Activated B cell treated with CpG ODN at 0.5 μM for 24 hours (primary cell): ENCODE measurements at regions of chr9 and their contacts with region 1.

Region 1: DNA sequence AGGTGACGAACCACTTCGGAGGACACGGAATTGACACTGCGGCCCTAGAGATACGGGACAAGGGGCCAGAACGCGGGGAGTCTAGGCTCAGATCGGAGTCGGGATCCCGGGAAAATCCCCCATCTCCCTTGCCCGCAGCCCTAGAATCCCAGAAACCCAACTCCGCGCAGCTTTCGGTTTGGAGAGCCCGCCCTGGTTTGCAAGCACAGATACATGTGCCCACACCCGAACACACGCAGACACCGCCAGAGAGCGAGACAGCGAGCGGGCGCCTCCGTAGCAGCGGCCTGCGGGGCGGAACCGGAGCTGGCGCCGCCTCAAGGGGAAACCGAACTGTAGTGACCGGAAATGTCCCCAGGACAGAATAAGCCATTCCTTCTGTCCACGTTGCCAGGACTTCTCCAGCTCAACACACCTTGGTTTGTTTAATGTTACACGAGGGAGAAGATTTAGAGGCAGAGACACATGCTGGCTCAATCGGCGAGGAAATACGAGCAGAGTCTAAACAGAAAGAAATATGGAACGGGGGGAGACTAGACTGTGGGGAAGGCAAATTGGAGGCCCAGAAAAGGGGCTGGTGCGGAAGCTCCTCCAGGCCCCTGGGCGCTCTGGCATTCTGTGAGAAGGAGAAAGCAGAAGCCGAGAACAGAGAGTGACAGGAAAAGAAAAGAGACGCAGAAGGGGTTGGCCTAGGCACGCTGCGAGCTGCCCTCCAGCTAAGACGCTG is 2.9 kb upstream of the PAX5 start:
- DNase-seq: peak; percentile 65
- ATAC-seq: peak; percentile 31
- H3K4me3 Mint-ChIP-seq: peak overlapping the region; percentile 90
- H3K27ac Mint-ChIP-seq: peak overlapping the region; percentile 96
- H3K4me1 Mint-ChIP-seq: peaks cover 65% of the 10 kb centered on the region
- H3K27me3 Mint-ChIP-seq: no peaks in the 10 kb centered on the region
- CTCF ChIP-seq: no peak

Region 2: DNA sequence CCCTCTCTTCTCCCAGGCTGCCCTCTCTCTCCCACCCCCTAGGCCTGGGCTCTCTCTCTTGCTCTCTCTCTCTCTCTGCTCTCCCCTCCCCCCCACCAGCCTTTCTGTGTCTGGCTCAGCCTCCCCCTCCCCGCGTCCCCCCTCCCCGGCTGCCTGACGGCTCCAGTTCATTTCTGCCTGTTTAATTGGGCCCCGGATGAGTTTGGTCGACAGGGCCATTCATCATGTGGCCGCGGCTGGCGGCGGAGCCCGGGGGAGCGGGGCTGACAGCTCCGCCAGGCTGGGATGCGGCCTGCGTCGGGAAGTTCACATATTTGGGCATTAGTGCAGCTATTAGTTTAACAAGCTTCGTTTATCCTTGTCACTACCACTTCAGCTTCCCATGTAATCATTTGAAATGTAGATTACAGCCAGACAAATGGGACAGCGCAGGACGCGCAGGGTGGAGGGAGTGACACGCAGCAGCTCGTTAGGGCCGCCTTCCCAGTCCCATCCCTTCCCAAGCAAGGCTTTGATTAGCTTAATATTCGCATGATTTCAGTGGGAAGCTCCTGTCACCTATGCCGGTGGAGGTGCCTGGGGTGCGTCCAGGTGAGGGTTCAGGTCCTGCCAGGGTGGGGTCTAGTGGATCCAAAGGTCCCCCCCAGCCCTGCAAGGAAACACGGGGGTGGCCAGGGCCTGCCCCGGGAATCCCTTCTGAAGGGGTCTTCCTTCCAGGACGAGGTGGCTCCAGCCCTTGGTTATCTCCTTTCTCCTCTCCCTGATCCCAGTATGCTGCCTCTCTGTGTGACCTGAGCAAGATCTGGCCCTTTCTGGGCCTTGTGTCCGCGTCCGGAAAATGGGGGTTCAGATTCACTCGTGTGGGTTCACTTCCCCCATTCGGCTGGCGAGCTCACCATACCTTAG is 217.7 kb before region 1 on chr9:
- CTCF ChIA-PET with region 1: no interaction called
- POLR2A ChIA-PET with region 1: no interaction called
- intact Hi-C with region 1: no loop called
- DNase-seq: no peak
- ATAC-seq: no peak
- H3K4me3 Mint-ChIP-seq: no peak overlapping the region
- H3K27ac Mint-ChIP-seq: no peak overlapping the region
- H3K4me1 Mint-ChIP-seq: peaks cover 6% of the 10 kb centered on the region
- H3K27me3 Mint-ChIP-seq: peaks cover 37% of the 10 kb centered on the region
- CTCF ChIP-seq: no peak

Region 3: DNA sequence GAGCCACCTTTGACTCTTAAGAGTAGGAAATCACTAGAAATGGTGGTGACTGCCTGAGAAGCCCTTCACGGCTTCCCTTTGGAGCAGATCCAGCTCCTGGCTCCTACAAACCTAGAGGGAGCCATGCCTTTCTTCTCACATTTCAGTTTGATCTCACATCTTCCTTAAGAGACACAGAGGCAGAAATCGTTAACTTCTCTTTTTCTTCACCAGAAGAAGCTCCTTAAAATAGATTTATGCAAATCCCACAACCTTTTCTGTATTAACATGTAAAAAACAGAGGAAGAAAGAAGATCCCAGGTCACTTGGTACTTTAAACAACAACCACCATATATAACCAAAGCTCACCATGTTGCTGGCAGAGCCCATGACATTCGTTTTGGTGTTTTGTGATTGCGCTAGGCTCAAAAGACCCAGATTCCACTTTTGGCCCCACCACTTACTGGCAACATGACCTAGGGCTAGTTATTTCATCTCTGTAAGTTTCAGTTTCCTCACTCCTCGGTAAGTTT is 32.5 kb before region 1 on chr9:
- CTCF ChIA-PET with region 1: interaction called, 3 read pairs
- POLR2A ChIA-PET with region 1: interaction called, 291 read pairs
- intact Hi-C with region 1: no loop called
- DNase-seq: no peak
- ATAC-seq: peak; percentile 37
- H3K4me3 Mint-ChIP-seq: peak overlapping the region; percentile 86
- H3K27ac Mint-ChIP-seq: peak overlapping the region; percentile 84
- H3K4me1 Mint-ChIP-seq: peaks cover 94% of the 10 kb centered on the region
- H3K27me3 Mint-ChIP-seq: no peaks in the 10 kb centered on the region
- CTCF ChIP-seq: no peak

Region 4: DNA sequence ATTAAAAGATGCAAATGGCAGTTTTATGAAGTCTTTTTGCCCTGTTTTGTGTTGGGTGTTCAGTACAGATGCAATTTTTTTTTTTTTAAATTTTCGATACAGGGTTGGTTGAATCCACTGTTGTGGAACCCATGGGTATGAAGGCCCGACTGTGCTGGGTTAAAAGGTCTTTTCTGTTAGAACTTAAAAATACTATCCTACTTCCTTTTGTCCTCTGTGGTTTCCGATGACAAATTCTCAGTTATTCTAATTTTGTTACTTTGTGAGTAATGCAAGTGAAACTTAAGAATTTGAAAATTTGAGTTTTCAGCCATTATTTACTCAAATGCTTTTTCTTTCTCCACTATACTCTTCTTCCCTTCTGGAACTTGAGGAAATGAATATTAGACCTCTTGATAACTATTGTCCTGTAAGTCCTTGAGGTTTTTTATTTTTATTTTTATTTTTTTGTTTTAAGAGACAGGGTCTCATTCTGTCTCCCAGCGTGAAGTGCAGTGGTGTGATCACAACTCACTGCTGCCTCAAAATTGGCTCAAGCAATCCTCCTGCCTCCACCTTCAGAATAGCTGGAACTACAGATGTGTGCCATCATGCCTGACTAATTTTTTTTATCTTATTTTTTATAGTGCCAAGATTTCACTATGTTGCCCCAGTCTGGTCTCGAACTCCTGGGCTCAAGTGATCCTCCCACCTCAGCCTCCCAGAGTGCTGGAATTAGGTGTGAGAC is 150.9 kb after region 1 on chr9:
- CTCF ChIA-PET with region 1: no interaction called
- POLR2A ChIA-PET with region 1: interaction called, 9 read pairs
- intact Hi-C with region 1: loop called (anchors 1 kb)
- DNase-seq: no peak
- ATAC-seq: peak; percentile 80
- H3K4me3 Mint-ChIP-seq: peak overlapping the region; percentile 83
- H3K27ac Mint-ChIP-seq: peak overlapping the region; percentile 97
- H3K4me1 Mint-ChIP-seq: peaks cover 80% of the 10 kb centered on the region
- H3K27me3 Mint-ChIP-seq: no peaks in the 10 kb centered on the region
- CTCF ChIP-seq: no peak

Region 5: DNA sequence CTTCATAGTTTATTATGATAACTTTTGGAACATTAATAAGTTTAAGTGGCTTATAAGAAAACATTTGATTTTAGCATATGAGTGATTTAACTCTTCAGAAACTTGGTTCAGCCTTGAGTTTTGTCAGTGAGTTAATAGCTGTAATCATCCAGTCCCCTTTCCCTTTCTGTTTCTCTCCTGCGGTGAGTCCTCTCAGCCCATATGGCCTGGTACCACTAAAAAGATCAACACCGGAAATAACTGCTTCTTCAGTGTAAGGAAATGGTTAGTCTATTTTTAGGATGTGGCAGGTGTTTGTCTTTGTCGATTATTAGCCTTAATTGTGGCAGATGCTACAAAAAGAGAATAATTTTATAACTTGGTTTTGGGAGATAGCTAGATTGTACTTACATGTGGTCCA is 265.3 kb after region 1 on chr9:
- CTCF ChIA-PET with region 1: interaction called, 4 read pairs
- POLR2A ChIA-PET with region 1: interaction called, 79 read pairs
- intact Hi-C with region 1: no loop called
- DNase-seq: no peak
- ATAC-seq: peak; percentile 84
- H3K4me3 Mint-ChIP-seq: peak overlapping the region; percentile 73
- H3K27ac Mint-ChIP-seq: peak overlapping the region; percentile 96
- H3K4me1 Mint-ChIP-seq: peaks cover 83% of the 10 kb centered on the region
- H3K27me3 Mint-ChIP-seq: no peaks in the 10 kb centered on the region
- CTCF ChIP-seq: no peak

Region 6: GRCh38 chr9:37364751-37365360 is 327.9 kb after region 1 on chr9:
- CTCF ChIA-PET with region 1: no interaction called
- POLR2A ChIA-PET with region 1: interaction called, 115 read pairs
- intact Hi-C with region 1: no loop called
- DNase-seq: no peak
- ATAC-seq: no peak
- H3K4me3 Mint-ChIP-seq: no peak overlapping the region
- H3K27ac Mint-ChIP-seq: peak overlapping the region; percentile 67
- H3K4me1 Mint-ChIP-seq: peaks cover 81% of the 10 kb centered on the region
- H3K27me3 Mint-ChIP-seq: no peaks in the 10 kb centered on the region
- CTCF ChIP-seq: no peak

Region 7: DNA sequence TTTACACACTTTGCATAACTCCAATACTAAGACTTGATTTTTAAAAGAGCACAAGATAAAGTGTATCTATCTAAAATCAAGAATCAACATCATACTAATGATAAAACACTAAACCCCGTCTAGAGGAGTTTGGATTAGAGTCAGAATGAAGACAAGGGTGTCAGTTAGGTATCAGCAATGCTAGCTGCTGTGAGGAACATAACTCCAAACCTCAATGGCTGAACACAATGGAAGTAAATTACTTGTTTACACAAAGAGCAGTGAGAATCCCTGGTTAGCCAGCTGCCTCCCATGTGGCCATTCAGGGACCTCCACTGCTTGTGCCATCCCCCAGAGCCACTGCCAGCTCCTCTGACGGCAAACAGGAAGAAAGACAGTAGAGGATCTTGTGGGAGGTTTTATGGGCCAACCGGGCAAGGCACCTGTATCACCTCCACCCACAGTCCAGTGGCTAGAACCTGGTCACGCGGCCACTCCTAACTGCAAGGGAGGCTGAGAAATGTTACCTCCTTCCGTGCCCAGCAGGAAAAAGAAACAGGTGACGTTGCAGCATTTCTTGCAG is 361.6 kb after region 1 on chr9:
- CTCF ChIA-PET with region 1: no interaction called
- POLR2A ChIA-PET with region 1: interaction called, 175 read pairs
- intact Hi-C with region 1: no loop called
- DNase-seq: no peak
- ATAC-seq: no peak
- H3K4me3 Mint-ChIP-seq: peak overlapping the region; percentile 66
- H3K27ac Mint-ChIP-seq: peak overlapping the region; percentile 92
- H3K4me1 Mint-ChIP-seq: peaks cover 73% of the 10 kb centered on the region
- H3K27me3 Mint-ChIP-seq: no peaks in the 10 kb centered on the region
- CTCF ChIP-seq: no peak